CD4-positive, alpha-beta memory T cell (primary cell): ENCODE measurements at regions of chr7 and their contacts with region 1.

Region 1: GRCh38 chr7:155344600-155345433 is 47.1 kb downstream of the INSIG1 start:
- DNase-seq: peak; percentile 71 to 85 (median 79)
- H3K4me3 ChIP-seq: peak overlapping the region; percentile 3 to 54
- H3K4me3 Mint-ChIP-seq: peak overlapping the region in 7 of 8 donors; percentile 44 to 83 (median 77)
- H3K27ac ChIP-seq: no peak overlapping the region
- H3K27ac Mint-ChIP-seq: peak overlapping the region in 3 of 7 donors; percentile 43 to 86 (median 79)
- H3K4me1 ChIP-seq: peaks cover 13% of the 10 kb centered on the region
- H3K4me1 Mint-ChIP-seq: peaks cover 2 to 6% (median 4%) of the 10 kb centered on the region in 4 donors
- H3K27me3 ChIP-seq: peaks cover 4% of the 10 kb centered on the region
- H3K27me3 Mint-ChIP-seq: peaks cover 0 to 3% of the 10 kb centered on the region in 2 donors

Region 2: GRCh38 chr7:154913638-154914312 is 431.0 kb before region 1 on chr7:
- CTCF ChIA-PET with region 1: interaction called, 10 read pairs
- POLR2A ChIA-PET with region 1: no interaction called
- intact Hi-C with region 1: loop called (anchors 1 kb)
- DNase-seq: peak; percentile 80 to 83 (median 80)
- H3K4me3 ChIP-seq: peak overlapping the region in 1 of 2 donors; percentile 29
- H3K4me3 Mint-ChIP-seq: peak overlapping the region; percentile 84 to 93 (median 88)
- H3K27ac ChIP-seq: no peak overlapping the region
- H3K27ac Mint-ChIP-seq: peak overlapping the region in 3 of 7 donors; percentile 74 to 83 (median 75)
- H3K4me1 ChIP-seq: peaks cover 5% of the 10 kb centered on the region
- H3K4me1 Mint-ChIP-seq: peaks cover 4 to 5% (median 4%) of the 10 kb centered on the region in 4 donors
- H3K27me3 ChIP-seq: no peaks in the 10 kb centered on the region
- H3K27me3 Mint-ChIP-seq: peaks cover 14 to 27% of the 10 kb centered on the region in 2 donors

Region 3: GRCh38 chr7:155190688-155191087 is 154.1 kb before region 1 on chr7:
- CTCF ChIA-PET with region 1: interaction called, 116 read pairs
- POLR2A ChIA-PET with region 1: interaction called, 3 read pairs
- intact Hi-C with region 1: loop called (anchors 1 kb)
- DNase-seq: peak in 4 of 5 donors; percentile 36 to 53 (median 40)
- H3K4me3 ChIP-seq: no peak overlapping the region
- H3K4me3 Mint-ChIP-seq: peak overlapping the region in 1 of 8 donors; percentile 26
- H3K27ac ChIP-seq: no peak overlapping the region
- H3K27ac Mint-ChIP-seq: no peak overlapping the region
- H3K4me1 ChIP-seq: no peaks in the 10 kb centered on the region
- H3K4me1 Mint-ChIP-seq: peaks cover 1 to 7% (median 4%) of the 10 kb centered on the region in 4 donors
- H3K27me3 ChIP-seq: no peaks in the 10 kb centered on the region
- H3K27me3 Mint-ChIP-seq: peaks cover 3 to 18% of the 10 kb centered on the region in 2 donors

Region 4: GRCh38 chr7:155205368-155206317 is 139.2 kb before region 1 on chr7:
- CTCF ChIA-PET with region 1: interaction called, 23 read pairs
- POLR2A ChIA-PET with region 1: interaction called, 9 read pairs
- intact Hi-C with region 1: loop called (anchors 5 kb)
- DNase-seq: peak; percentile 88 to 97 (median 90)
- H3K4me3 ChIP-seq: peak overlapping the region; percentile 66 to 89
- H3K4me3 Mint-ChIP-seq: peak overlapping the region; percentile 83 to 93 (median 88)
- H3K27ac ChIP-seq: peak overlapping the region; percentile 77
- H3K27ac Mint-ChIP-seq: peak overlapping the region; percentile 92 to 99 (median 96)
- H3K4me1 ChIP-seq: peaks cover 15% of the 10 kb centered on the region
- H3K4me1 Mint-ChIP-seq: peaks cover 15 to 27% (median 22%) of the 10 kb centered on the region in 4 donors
- H3K27me3 ChIP-seq: no peaks in the 10 kb centered on the region
- H3K27me3 Mint-ChIP-seq: no peaks in the 10 kb centered on the region

Region 5: DNA sequence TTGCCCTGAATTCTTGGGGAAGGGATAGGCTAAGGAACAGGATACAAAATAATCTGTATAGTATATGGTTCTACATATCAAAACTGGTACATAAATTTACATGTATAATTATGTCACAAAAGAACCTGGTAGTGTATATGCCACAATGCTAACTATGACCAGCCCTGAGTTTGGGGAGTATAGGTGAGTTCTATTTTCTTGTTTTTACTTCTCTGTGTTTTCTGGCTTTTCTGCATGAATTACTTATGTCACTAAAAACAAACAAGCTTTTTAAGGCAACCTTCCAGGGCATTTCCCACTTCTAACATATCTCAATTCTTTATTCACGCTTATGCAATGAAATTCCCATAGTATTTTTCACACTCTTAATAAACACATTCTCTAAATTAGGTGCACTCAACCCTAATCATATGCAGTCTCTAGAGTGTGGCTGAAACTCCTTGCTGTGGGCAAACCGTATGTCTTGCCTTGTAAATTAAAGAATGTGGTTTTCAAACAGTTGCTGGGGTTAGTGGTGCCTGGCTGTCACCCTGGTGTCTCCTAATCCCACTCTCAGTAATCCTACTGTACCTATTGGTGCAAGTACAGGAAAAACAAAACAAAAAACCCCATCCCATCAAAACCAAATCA is 61.1 kb before region 1 on chr7:
- CTCF ChIA-PET with region 1: interaction called, 5 read pairs
- POLR2A ChIA-PET with region 1: no interaction called
- intact Hi-C with region 1: loop called (anchors 5 kb)
- DNase-seq: no peak
- H3K4me3 ChIP-seq: no peak overlapping the region
- H3K4me3 Mint-ChIP-seq: no peak overlapping the region
- H3K27ac ChIP-seq: no peak overlapping the region
- H3K27ac Mint-ChIP-seq: no peak overlapping the region
- H3K4me1 ChIP-seq: no peaks in the 10 kb centered on the region
- H3K4me1 Mint-ChIP-seq: peaks cover 16 to 24% (median 21%) of the 10 kb centered on the region in 4 donors
- H3K27me3 ChIP-seq: no peaks in the 10 kb centered on the region
- H3K27me3 Mint-ChIP-seq: peaks cover under 1 to 7% of the 10 kb centered on the region in 2 donors

Region 6: GRCh38 chr7:155332209-155332965 is 12.4 kb before region 1 on chr7:
- CTCF ChIA-PET with region 1: interaction called, 11 read pairs
- POLR2A ChIA-PET with region 1: no interaction called
- intact Hi-C with region 1: no loop called
- DNase-seq: no peak
- H3K4me3 ChIP-seq: no peak overlapping the region
- H3K4me3 Mint-ChIP-seq: no peak overlapping the region
- H3K27ac ChIP-seq: no peak overlapping the region
- H3K27ac Mint-ChIP-seq: no peak overlapping the region
- H3K4me1 ChIP-seq: no peaks in the 10 kb centered on the region
- H3K4me1 Mint-ChIP-seq: no peaks in the 10 kb centered on the region
- H3K27me3 ChIP-seq: no peaks in the 10 kb centered on the region
- H3K27me3 Mint-ChIP-seq: no peaks in the 10 kb centered on the region